Left cardiac atrium (tissue), 4 donors: ENCODE measurements at regions of chr4 and their contacts with region 1.

Region 1: DNA sequence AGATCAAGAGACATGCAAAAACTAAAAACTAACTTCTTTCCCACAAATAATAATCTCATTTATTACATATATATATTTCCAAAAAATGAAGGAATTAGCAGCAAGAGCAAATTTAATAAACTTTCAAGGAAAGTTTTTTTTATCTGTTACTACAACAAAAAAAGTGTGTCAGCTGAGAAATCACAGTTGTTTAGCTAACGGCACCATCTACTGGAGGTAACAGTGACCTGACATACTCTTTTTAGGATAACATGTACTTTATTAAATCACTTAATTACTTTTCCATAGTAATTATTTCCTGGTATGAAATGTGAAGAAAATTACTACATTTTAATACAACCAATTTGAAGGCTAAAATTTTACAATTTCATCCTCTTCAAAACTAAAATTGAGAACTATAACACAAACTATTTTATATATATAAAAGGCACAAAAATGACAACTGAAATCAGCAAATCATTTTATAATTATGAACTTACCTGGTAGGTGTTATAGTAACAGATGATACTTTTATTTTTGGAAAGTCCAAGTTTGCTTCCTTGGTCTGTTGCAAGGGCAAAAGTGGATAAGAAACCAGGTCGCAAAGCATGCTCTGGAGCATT is 9.1 kb downstream of the LAMTOR3 start:
- DNase-seq: no peak
- ATAC-seq: no peak

Region 2: DNA sequence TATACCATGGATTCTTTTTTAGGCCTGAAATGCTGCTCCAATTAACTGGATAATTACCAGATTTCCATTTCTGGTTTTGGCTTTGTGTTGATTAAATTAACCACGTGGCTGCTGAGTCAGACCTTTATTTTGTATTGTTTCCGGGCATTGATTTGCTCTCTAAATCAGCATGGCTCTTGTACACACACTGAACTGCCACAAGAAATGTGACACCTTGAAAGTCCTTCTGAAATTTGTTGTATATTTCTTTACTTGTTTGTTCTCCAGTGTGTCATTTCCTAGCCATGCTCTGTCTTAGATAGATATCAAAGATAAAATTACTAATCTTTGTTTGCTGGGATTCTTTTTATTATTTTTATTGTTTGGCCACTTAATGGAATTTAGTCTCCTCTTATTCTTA is 298.8 kb before region 1 on chr4:
- intact Hi-C with region 1: no loop called
- DNase-seq: no peak
- ATAC-seq: no peak

Region 3: DNA sequence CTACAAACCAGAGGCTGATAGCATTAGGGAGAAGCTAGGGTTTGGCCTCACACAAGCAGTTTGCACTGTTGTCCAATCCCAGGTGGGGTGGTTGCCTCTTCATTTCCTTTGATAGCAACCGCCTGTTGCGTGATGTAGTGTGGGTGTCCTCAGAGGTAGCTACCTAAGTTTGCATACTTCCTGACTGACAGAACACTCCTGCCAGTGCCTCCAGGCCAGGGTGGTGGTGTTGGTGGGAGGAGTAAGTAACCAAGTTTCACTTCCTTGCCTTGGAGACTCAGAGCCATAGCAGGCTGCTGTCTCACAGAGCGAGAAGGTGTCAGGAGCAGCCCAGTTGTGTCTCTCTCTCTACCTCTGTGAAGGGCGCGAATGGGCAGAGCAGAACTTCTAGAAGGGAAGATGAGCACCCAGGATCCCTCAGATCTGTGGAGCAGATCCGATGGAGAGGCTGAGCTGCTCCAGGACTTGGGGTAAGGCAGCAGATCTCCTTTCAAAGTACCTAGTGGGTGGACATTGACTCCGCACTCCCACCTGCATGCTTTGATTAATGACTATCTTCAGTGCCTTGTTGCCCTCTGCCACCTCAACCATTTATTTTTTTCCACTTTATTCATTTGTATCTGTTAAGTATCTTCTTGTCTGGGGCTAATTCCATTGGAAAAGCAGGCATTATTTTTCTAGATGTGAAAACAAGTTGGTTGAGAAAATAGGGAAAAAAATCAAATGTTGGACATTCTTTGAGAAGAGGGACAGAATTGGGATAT is 68.4 kb before region 1 on chr4 and contains the start of gene DAPP1:
- intact Hi-C with region 1: loop called (anchors 10 kb)
- DNase-seq: no peak
- ATAC-seq: peak; percentile 81 to 83
- total RNA-seq, gene DAPP1: 0.89 to 1.5 TPM